Left cardiac atrium (tissue), 4 donors: ENCODE measurements at regions of chr11 and their contacts with region 1.

Region 1: GRCh38 chr11:61152816-61153592 is 8.2 kb downstream of the VPS37C start:
- DNase-seq: no peak
- ATAC-seq: peak; percentile 73 to 86

Region 2: GRCh38 chr11:60906132-60906972 is 246.7 kb before region 1 on chr11 and contains the start of gene PRPF19:
- intact Hi-C with region 1: loop called in 1 of 2 experiments (anchors 10 kb)
- DNase-seq: peak; percentile 96
- ATAC-seq: peak; percentile 96 to 97
- total RNA-seq, gene PRPF19: 40.3 to 42.3 TPM

Region 3: GRCh38 chr11:61071208-61071681 is 81.8 kb before region 1 on chr11:
- intact Hi-C with region 1: no loop called
- DNase-seq: no peak
- ATAC-seq: peak in 1 of 2 donors; percentile 36